Naive thymus-derived CD4-positive, alpha-beta T cell (primary cell): ENCODE measurements at regions of chr19 and their contacts with region 1.

Region 1: DNA sequence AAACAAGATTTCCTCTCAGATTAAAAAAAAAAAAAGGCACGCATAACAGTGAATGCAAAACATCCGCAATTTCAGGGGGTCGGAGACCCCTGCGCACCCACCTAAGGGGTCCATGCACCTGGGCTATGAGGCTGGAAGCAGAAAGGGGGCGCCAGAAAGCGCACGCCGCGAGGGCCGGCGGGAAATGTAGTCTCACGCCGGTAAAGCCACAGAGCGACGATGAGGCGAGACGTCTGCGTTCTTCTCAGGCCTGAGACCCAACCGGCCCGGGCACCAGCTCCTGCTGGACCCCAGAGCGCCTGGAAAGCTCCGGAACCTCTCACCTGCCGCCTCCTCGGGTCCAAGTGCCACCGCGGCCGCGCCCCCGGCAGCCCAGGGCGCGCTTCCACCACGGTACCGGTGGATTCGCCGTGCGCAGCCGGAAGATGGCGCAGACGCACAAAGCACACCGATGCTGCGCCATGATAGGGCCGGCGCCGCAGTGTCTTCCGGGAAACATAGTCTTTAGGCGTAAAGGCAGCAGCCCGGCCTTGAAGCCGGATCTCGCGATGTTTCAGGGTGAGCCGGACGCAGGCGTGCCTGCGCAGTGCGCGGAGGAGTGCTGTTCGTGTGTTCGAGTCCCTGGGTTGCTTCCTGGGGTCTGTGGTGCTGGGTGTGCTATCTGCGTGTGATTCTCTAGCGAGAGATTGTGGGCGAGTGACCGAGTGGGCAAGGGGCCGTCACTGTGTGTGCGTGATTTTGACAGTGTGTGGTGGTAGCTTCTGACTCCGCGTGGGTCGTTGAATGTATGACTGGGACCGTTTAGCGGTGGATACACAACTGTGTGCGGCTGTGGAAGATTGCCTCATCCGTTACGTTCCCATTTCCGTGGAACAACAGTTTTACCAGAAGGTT is at the start of gene ZNF582:
- DNase-seq: peak; percentile 79 to 94 (median 90)
- ATAC-seq: peak; percentile 98
- H3K4me3 ChIP-seq: peak within 1 kb of the TSS; percentile 90
- H3K4me3 Mint-ChIP-seq: peak within 1 kb of the TSS; percentile 89 to 99 (median 98)
- H3K27ac ChIP-seq: peak within 1 kb of the TSS; percentile 92
- H3K27ac Mint-ChIP-seq: peak within 1 kb of the TSS; percentile 91 to 99 (median 96)
- H3K4me1 ChIP-seq: peaks cover 3 to 5% of the 10 kb centered on the region in 2 donors
- H3K4me1 Mint-ChIP-seq: peaks cover 3 to 32% (median 10%) of the 10 kb centered on the region in 7 donors
- H3K27me3 ChIP-seq: no peaks in the 10 kb centered on the region
- H3K27me3 Mint-ChIP-seq: no peaks in the 10 kb centered on the region
- total RNA-seq, gene ZNF582: 1.7 to 7.6 (median 3.3) TPM

Region 2: GRCh38 chr19:56314562-56315077 is 78.7 kb before region 1 on chr19 and contains the start of gene ZSCAN5A:
- CTCF ChIA-PET with region 1: no interaction called
- POLR2A ChIA-PET with region 1: interaction called, 4 read pairs
- intact Hi-C with region 1: loop called (anchors 1 kb)
- DNase-seq: peak; percentile 93 to 99 (median 99)
- ATAC-seq: peak; percentile 85
- H3K4me3 ChIP-seq: peak within 1 kb of the TSS; percentile 86
- H3K4me3 Mint-ChIP-seq: peak within 1 kb of the TSS; percentile 79 to 100 (median 96)
- H3K27ac ChIP-seq: peak within 1 kb of the TSS; percentile 97
- H3K27ac Mint-ChIP-seq: peak within 1 kb of the TSS; percentile 95 to 100 (median 99)
- H3K4me1 ChIP-seq: peaks cover 4 to 10% of the 10 kb centered on the region in 2 donors
- H3K4me1 Mint-ChIP-seq: peaks cover 13 to 41% (median 26%) of the 10 kb centered on the region in 7 donors
- H3K27me3 ChIP-seq: no peaks in the 10 kb centered on the region
- H3K27me3 Mint-ChIP-seq: no peaks in the 10 kb centered on the region
- total RNA-seq, gene ZSCAN5A: 8.0 to 15.4 (median 11.8) TPM

Region 3: DNA sequence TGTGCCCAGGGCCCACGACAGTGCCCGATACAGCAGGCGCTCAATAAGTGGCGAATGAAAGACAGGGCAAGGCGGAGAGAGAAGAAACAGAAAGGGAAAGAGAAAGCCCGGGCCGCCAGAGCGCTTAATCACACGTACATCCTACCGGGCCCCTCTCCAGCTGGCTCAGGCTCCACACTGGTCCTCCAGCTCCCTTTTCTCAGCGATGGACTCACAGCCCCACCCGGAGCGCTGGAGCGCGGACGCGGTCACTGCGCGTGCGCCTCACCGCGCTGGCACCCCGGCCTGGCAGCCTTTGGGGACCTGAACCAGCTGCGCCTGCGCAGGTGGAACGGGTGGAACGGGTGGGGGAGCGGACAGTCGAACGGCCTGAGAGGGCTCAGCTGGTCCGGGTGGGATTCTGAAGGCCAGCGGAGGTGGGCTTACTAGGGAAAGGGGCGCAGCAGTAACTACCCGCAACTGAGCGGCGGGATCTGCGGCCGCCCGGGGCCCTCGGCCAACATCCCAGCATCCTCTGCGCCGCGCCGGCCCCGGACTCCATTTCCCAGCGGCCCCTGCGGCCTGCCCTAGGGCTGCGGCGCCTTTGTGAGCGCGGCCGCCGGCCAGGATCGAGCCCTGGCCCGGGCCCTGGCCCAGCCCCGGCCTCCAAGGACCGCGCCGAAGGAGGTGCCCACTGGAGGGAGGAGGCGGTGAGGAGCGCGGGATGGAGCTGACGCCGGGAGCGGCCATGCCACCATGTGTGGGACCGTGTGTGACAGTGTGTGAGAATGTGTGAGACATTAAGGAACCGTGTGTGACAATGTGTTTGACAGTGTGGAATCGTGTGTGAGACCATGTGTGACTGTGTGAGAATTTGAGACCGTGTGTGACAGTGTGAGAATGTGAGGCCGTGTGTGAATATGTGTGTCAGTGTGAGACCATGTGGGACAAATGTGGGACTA is 10.7 kb after region 1 on chr19 and contains the start of gene ZNF583:
- CTCF ChIA-PET with region 1: interaction called, 3 read pairs
- POLR2A ChIA-PET with region 1: interaction called, 7 read pairs
- intact Hi-C with region 1: loop called (anchors 1 kb)
- DNase-seq: peak; percentile 82 to 93 (median 90)
- ATAC-seq: peak; percentile 93
- H3K4me3 ChIP-seq: peak within 1 kb of the TSS; percentile 86
- H3K4me3 Mint-ChIP-seq: peak within 1 kb of the TSS; percentile 87 to 98 (median 94)
- H3K27ac ChIP-seq: peak within 1 kb of the TSS; percentile 96
- H3K27ac Mint-ChIP-seq: peak within 1 kb of the TSS; percentile 80 to 98 (median 95)
- H3K4me1 ChIP-seq: peaks cover 8 to 16% of the 10 kb centered on the region in 2 donors
- H3K4me1 Mint-ChIP-seq: peaks cover 19 to 37% (median 30%) of the 10 kb centered on the region in 7 donors
- H3K27me3 ChIP-seq: no peaks in the 10 kb centered on the region
- H3K27me3 Mint-ChIP-seq: no peaks in the 10 kb centered on the region
- total RNA-seq, gene ZNF583: 2.4 to 14.3 (median 3.1) TPM

Region 4: DNA sequence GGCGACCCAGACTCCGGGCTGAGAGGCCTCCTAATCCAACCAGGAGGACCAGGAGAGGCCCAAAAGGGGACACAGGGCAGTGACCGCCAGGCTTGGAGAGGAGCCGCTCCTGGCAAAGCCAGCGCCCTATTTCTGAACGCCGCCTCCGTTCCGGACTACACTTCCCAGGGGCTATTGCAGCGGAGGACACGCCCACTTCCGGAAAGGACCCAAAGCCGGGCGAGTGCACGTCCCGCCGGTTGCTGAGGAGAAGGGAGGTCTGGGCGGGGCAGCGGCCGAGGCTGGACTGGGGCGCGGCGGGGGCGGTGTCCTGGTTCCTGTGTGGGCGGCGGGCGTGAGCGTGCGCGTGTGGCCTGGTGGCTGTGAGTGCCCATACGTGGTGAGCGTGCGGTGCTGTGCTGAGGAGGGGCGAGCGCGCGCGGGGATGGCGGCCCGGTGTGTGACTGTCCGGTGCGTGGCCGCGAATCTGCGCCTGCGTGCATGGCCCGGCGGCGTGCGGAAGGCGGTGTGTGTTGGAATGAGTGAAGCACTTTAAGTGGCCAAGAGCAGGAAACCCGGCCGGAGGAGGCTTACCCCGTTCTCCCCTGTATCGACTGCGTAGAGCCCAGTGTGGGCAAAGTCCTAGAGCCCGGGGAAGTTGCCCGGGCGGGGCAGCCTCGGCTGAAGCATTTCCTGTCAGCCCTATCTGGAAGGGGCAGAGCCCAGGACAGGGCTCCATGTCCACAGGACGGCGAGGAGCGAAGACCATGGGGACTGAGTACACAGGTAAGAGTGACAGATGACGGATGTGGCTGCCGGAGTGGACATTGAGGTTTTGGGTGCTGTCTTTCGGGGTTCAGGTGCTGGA is 174.1 kb after region 1 on chr19 and contains the start of gene ZNF470:
- CTCF ChIA-PET with region 1: no interaction called
- POLR2A ChIA-PET with region 1: no interaction called
- intact Hi-C with region 1: loop called (anchors 1 to 2 kb)
- DNase-seq: peak; percentile 73 to 86 (median 80)
- ATAC-seq: peak; percentile 98
- H3K4me3 ChIP-seq: peak within 1 kb of the TSS; percentile 86
- H3K4me3 Mint-ChIP-seq: peak within 1 kb of the TSS; percentile 89 to 98 (median 96)
- H3K27ac ChIP-seq: peak within 1 kb of the TSS; percentile 77
- H3K27ac Mint-ChIP-seq: peak within 1 kb of the TSS; percentile 59 to 91 (median 84)
- H3K4me1 ChIP-seq: peaks cover 0 to 9% of the 10 kb centered on the region in 2 donors
- H3K4me1 Mint-ChIP-seq: peaks cover 10 to 25% (median 13%) of the 10 kb centered on the region in 7 donors
- H3K27me3 ChIP-seq: no peaks in the 10 kb centered on the region
- H3K27me3 Mint-ChIP-seq: no peaks in the 10 kb centered on the region
- total RNA-seq, gene ZNF470: 0.98 to 5.9 (median 2.4) TPM

Region 5: GRCh38 chr19:56671613-56671994 is 278.2 kb after region 1 on chr19 and contains the start of gene ZNF835:
- CTCF ChIA-PET with region 1: no interaction called
- POLR2A ChIA-PET with region 1: no interaction called
- intact Hi-C with region 1: loop called in 1 of 2 experiments (anchors 2 kb)
- DNase-seq: peak; percentile 52 to 83 (median 75)
- ATAC-seq: peak; percentile 95
- H3K4me3 ChIP-seq: peak within 1 kb of the TSS; percentile 53
- H3K4me3 Mint-ChIP-seq: peak within 1 kb of the TSS; percentile 69 to 95 (median 89)
- H3K27ac ChIP-seq: peak within 1 kb of the TSS; percentile 67
- H3K27ac Mint-ChIP-seq: peak within 1 kb of the TSS in 6 of 9 donors; percentile 40 to 95 (median 80)
- H3K4me1 ChIP-seq: peaks cover 0 to 7% of the 10 kb centered on the region in 2 donors
- H3K4me1 Mint-ChIP-seq: peaks cover 0 to 17% (median 11%) of the 10 kb centered on the region in 7 donors
- H3K27me3 ChIP-seq: no peaks in the 10 kb centered on the region
- H3K27me3 Mint-ChIP-seq: no peaks in the 10 kb centered on the region
- total RNA-seq, gene ZNF835: 0.73 to 5.7 (median 1.4) TPM

Region 6: GRCh38 chr19:57719901-57720519 is 1326.6 kb after region 1 on chr19:
- CTCF ChIA-PET with region 1: no interaction called
- POLR2A ChIA-PET with region 1: no interaction called
- intact Hi-C with region 1: loop called in 1 of 2 experiments (anchors 10 kb)
- DNase-seq: no peak
- ATAC-seq: no peak
- H3K4me3 ChIP-seq: peak overlapping the region; percentile 14
- H3K4me3 Mint-ChIP-seq: no peak overlapping the region
- H3K27ac ChIP-seq: no peak overlapping the region
- H3K27ac Mint-ChIP-seq: no peak overlapping the region
- H3K4me1 ChIP-seq: no peaks in the 10 kb centered on the region
- H3K4me1 Mint-ChIP-seq: peaks cover under 1 to 14% (median 9%) of the 10 kb centered on the region in 7 donors
- H3K27me3 ChIP-seq: no peaks in the 10 kb centered on the region
- H3K27me3 Mint-ChIP-seq: no peaks in the 10 kb centered on the region